ENCODE measurements at regions of chr22 and their contacts with region 1.

Region 1: DNA sequence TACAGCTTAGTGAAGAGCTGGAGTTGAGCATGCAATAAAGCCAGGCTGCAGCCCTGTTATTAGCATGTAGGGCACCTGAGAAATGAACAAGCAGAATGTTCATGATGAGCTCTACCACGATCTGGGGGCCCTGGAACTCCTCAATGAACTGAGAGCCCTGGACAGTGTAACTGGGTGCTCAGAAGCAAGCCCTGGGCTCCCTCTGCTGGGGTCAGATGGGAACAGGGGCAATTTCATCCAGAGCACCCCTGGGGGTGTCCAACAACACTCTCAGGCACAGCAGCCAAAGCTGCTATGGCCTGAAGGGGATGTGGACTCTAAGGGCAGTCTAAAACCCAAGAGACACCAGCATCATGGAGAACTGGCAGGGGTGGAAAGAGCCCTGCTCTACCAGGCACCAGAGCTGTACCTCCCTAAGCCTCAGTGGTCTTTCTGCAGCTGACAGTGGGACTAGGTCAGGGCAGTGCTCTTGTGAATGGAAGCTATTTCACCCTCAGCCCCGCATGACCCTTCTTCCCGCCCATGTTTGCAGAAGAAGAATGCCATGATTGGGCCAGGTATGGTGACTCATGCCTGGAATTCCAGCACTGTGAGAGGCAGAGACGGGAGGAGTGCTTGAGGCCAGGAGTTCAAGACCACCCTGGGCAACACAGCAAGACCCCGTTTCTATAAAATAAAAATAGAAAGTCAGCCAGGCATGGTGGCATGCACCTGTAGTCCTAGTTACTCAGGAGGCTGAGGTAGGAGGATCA is 28.9 kb downstream of the THOC5 start:
- DNase-seq: peak; percentile 42 to 70 (median 68)
- H3K4me3 ChIP-seq: no peak overlapping the region
- H3K27ac ChIP-seq: no peak overlapping the region
- H3K4me1 ChIP-seq: no peaks in the 10 kb centered on the region
- H3K27me3 ChIP-seq: no peaks in the 10 kb centered on the region

Region 2: DNA sequence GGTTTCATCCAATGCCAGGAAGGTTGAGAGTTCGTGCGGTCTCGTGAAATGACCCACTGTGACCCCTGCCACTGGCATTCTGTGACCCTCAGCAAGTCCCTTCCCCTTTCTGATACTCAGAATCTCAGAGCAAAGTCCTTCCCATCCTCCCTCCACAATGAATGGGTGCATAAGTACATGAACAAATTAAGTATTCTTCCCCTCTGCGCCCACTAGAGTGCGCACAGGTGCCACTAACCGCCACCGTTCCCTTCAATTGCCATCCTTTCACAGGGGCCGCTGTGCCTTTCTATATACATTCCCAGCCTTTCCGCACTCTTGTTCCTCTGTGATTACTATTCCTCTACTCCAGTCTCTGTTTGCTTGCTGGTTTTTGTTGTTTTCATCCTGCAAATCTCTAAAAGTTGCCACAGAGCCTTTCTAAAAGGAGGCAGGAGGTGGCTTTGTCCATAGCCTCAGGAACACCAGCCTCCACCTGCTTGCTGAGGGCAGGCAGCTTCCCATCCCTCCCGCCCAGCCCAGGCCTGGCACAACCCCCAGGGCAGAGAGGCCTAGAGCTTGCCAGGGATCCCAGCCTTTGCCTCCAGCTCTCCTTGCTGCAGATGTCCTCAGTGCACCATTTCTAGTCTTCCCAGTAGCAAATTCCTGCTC is 129.6 kb before region 1 on chr22:
- CTCF ChIA-PET with region 1: interaction called, 21 read pairs
- POLR2A ChIA-PET with region 1: no interaction called
- DNase-seq: peak; percentile 71 to 84 (median 82)
- H3K4me3 ChIP-seq: no peak overlapping the region
- H3K27ac ChIP-seq: no peak overlapping the region
- H3K4me1 ChIP-seq: peaks cover 3 to 17% (median 11%) of the 10 kb centered on the region in 4 experiments
- H3K27me3 ChIP-seq: no peaks in the 10 kb centered on the region

Region 3: GRCh38 chr22:29443452-29443851 is 81.2 kb before region 1 on chr22:
- CTCF ChIA-PET with region 1: no interaction called
- POLR2A ChIA-PET with region 1: no interaction called
- DNase-seq: no peak
- H3K4me3 ChIP-seq: no peak overlapping the region
- H3K27ac ChIP-seq: no peak overlapping the region
- H3K4me1 ChIP-seq: no peaks in the 10 kb centered on the region
- H3K27me3 ChIP-seq: no peaks in the 10 kb centered on the region

Region 4: DNA sequence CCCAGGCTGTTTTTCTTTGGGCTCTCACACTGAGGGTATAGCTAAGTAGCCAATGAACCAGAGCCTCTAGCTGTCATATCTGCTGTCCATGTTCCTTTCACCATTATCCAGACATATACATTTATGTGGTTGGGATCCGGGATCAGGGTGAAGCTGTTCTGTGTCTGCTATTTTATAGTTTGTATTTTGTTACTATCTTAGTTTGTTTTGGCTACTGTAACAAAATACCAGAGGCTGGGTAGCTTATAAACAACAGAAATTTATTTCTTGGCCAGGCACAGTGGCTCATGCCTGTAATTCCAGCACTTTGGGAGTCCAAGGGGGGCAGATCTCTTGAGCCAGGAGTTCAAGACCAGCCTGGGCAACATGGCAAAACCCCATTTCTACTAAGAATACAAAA is 154.7 kb after region 1 on chr22:
- CTCF ChIA-PET with region 1: no interaction called
- POLR2A ChIA-PET with region 1: no interaction called
- DNase-seq: no peak
- H3K4me3 ChIP-seq: no peak overlapping the region
- H3K27ac ChIP-seq: no peak overlapping the region
- H3K4me1 ChIP-seq: no peaks in the 10 kb centered on the region
- H3K27me3 ChIP-seq: no peaks in the 10 kb centered on the region